Right cardiac atrium (tissue), 5 donors: ENCODE measurements at regions of chr11 and their contacts with region 1.

Region 1: GRCh38 chr11:100681064-100681502 is 6.0 kb upstream of the ARHGAP42 start:
- DNase-seq: peak; percentile 49 to 73 (median 65)
- ATAC-seq: peak; percentile 54 to 70
- H3K4me3 ChIP-seq: no peak overlapping the region
- H3K27ac ChIP-seq: no peak overlapping the region
- H3K4me1 ChIP-seq: peaks cover 2% of the 10 kb centered on the region
- H3K27me3 ChIP-seq: no peaks in the 10 kb centered on the region

Region 2: DNA sequence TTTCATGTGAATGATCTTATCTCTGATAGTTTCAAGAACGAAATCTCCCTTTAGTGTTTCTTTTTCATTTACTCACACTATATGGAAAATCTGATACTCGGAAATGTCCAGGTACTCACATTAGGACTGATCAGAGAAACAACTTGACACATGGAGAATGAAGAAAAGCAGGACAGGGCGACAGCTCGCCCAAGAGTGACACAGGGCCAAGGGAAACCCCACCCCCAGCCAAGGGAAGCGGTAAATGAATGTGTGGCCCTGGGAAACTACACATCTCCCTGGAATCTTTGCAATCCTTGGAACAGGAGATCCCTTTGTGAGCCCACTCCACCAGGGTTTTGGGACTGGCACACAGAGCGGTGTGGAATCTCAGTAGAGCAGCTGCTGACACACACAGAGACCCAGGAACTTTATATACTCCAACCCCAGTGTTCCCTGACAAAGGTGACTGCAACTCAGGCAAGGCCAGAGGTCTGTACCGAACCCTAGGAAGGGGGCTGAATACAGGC is 297.7 kb before region 1 on chr11:
- intact Hi-C with region 1: no loop called
- DNase-seq: no peak
- ATAC-seq: no peak
- H3K4me3 ChIP-seq: no peak overlapping the region
- H3K27ac ChIP-seq: no peak overlapping the region
- H3K4me1 ChIP-seq: no peaks in the 10 kb centered on the region
- H3K27me3 ChIP-seq: no peaks in the 10 kb centered on the region

Region 3: DNA sequence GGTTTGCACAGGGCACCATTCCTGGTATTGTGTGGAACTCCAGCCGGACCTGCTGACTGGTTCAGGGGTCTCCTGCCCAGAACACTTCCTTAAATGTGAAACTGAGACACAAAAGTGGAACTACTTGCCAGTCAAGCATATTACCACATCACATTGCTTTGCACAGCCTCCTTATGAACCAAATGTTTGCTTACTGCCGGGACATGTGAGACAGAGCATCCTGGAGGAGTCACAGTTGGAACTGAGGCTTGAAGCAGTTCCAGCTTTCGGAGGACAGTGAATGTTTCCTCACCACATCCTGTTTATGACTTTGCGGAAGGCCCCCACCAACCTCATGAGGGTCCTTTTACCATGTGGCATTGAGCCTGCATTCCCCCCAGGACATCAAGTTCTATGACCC is 99.8 kb before region 1 on chr11:
- intact Hi-C with region 1: loop called in 2 of 4 experiments (anchors 5 to 10 kb)
- DNase-seq: no peak
- ATAC-seq: peak in 1 of 2 donors; percentile 25
- H3K4me3 ChIP-seq: no peak overlapping the region
- H3K27ac ChIP-seq: no peak overlapping the region
- H3K4me1 ChIP-seq: peaks cover 5% of the 10 kb centered on the region
- H3K27me3 ChIP-seq: no peaks in the 10 kb centered on the region

Region 4: GRCh38 chr11:100863080-100863581 is 182.0 kb after region 1 on chr11:
- intact Hi-C with region 1: loop called in 1 of 4 experiments (anchors 5 kb)
- DNase-seq: peak in 2 of 3 donors; percentile 33 to 50
- ATAC-seq: peak; percentile 76 to 90
- H3K4me3 ChIP-seq: no peak overlapping the region
- H3K27ac ChIP-seq: no peak overlapping the region
- H3K4me1 ChIP-seq: no peaks in the 10 kb centered on the region
- H3K27me3 ChIP-seq: no peaks in the 10 kb centered on the region

Region 5: DNA sequence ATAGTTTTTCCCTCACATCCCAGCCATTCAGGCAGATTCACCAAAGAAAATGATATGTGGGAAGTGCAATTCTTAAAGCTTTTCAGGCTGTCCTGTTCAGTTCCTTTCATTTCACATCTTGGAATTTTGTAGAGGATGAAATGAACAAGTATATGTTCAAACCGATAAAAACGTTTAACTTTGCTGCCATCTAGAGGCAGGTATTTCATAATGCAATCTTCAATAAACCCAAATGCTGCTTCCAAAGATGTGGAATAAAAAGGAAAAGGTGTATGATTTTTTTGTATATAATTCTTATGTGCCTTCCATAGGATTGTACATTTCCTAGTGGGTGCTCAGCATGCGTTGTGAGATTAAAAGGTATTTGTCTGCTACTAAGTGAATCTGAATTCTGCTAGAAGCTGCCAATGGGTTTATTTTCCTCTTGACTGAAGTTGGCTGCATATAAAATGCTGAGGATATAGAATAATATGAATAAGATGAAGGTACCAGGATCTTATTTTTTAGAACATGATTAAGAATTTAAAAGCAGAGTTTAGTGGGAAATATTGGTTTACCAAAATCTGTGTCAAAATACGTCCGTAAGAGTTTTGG is 249.2 kb after region 1 on chr11:
- intact Hi-C with region 1: loop called in 3 of 4 experiments (anchors 5 to 10 kb)
- DNase-seq: no peak
- ATAC-seq: peak in 1 of 2 donors; percentile 51
- H3K4me3 ChIP-seq: no peak overlapping the region
- H3K27ac ChIP-seq: no peak overlapping the region
- H3K4me1 ChIP-seq: no peaks in the 10 kb centered on the region
- H3K27me3 ChIP-seq: no peaks in the 10 kb centered on the region